Spleen (tissue), 13 donors: ENCODE measurements at regions of chr10 and their contacts with region 1.

Region 1: DNA sequence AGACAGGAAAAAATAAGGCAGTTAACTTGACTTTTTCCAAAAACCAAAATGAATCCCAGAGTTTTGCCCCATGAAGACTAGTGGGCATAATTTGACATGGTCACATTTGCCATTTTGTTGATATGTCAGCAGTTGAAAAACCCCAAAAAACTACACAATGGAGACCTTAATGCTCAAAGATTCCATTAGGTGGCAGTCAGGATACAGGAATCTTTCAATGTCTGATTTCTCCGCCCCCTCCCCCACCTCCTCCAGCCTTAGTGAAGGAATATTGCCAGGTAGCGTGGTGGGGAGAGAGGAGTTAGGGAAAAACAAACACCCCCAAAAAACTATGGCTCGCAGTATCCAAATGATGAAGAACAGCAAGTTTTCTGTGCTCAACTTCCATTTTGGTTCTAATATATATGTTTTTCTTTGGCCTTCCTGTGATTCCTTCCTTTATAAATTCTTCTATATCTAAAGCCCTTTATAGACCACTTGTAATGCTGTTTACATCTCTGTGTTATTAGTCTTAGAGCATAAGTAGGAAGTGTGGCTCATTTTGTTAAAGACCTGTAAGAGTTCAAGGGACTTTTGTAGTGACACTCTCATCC is 6.7 kb upstream of the SMNDC1 start:
- DNase-seq: no peak
- H3K4me3 ChIP-seq: no peak overlapping the region
- H3K27ac ChIP-seq: peak overlapping the region in 1 of 8 donors; percentile 23
- H3K4me1 ChIP-seq: peaks cover 8 to 45% (median 23%) of the 10 kb centered on the region in 6 donors
- H3K27me3 ChIP-seq: no peaks in the 10 kb centered on the region
- CTCF ChIP-seq: peak in 10 of 11 experiments; percentile 45 to 86 (median 65)
- POLR2A ChIP-seq: no peak

Region 2: GRCh38 chr10:110151467-110151866 is 160.0 kb before region 1 on chr10:
- intact Hi-C with region 1: no loop called
- DNase-seq: no peak
- H3K4me3 ChIP-seq: no peak overlapping the region
- H3K27ac ChIP-seq: no peak overlapping the region
- H3K4me1 ChIP-seq: peaks cover 0 to 27% (median 6%) of the 10 kb centered on the region in 6 donors
- H3K27me3 ChIP-seq: peaks cover 0 to 61% (median 10%) of the 10 kb centered on the region in 7 donors
- CTCF ChIP-seq: no peak
- POLR2A ChIP-seq: no peak

Region 3: DNA sequence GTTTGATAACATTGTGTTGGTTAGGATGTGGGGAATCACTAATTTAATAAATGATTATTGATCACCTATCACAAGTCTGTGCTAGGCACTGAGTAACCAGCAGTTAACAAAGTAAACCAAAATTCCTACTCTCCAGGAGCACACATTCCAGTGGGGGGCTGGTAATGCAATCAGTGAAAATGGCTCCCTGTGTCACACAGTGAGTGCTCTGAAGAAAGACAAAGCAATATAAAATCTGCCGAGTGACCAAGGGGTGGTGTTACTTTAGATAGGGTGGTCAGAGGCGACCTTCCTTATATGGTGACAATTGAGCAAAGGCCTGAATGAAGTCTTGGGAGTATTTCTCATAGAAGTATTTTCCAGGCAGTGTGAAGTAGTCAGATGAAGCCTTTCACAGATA is 242.5 kb after region 1 on chr10:
- intact Hi-C with region 1: loop called (anchors 5 kb)
- DNase-seq: no peak
- H3K4me3 ChIP-seq: no peak overlapping the region
- H3K27ac ChIP-seq: no peak overlapping the region
- H3K4me1 ChIP-seq: peaks cover 0 to 5% (median 0%) of the 10 kb centered on the region in 6 donors
- H3K27me3 ChIP-seq: no peaks in the 10 kb centered on the region
- CTCF ChIP-seq: no peak
- POLR2A ChIP-seq: no peak